ENCODE measurements at regions of chr7 and their contacts with region 1.

Region 1: GRCh38 chr7:98168181-98168905 is 42.9 kb upstream of the BHLHA15 start:
- DNase-seq: peak in 1 of 4 donors; percentile 76
- ATAC-seq: peak; percentile 83
- H3K4me3 ChIP-seq: no peak overlapping the region
- H3K27ac ChIP-seq: no peak overlapping the region
- H3K4me1 ChIP-seq: peaks cover 7 to 11% of the 10 kb centered on the region in 2 donors
- H3K27me3 ChIP-seq: no peaks in the 10 kb centered on the region
- CTCF ChIP-seq: peak; percentile 71 to 79

Region 2: GRCh38 chr7:98021588-98022351 is 146.6 kb before region 1 on chr7:
- intact Hi-C with region 1: loop called (anchors 5 to 10 kb)
- DNase-seq: peak; percentile 26 to 96 (median 67)
- ATAC-seq: peak; percentile 97
- H3K4me3 ChIP-seq: no peak overlapping the region
- H3K27ac ChIP-seq: no peak overlapping the region
- H3K4me1 ChIP-seq: no peaks in the 10 kb centered on the region
- H3K27me3 ChIP-seq: peaks cover 0 to 34% of the 10 kb centered on the region in 2 donors
- CTCF ChIP-seq: peak; percentile 95

Region 3: DNA sequence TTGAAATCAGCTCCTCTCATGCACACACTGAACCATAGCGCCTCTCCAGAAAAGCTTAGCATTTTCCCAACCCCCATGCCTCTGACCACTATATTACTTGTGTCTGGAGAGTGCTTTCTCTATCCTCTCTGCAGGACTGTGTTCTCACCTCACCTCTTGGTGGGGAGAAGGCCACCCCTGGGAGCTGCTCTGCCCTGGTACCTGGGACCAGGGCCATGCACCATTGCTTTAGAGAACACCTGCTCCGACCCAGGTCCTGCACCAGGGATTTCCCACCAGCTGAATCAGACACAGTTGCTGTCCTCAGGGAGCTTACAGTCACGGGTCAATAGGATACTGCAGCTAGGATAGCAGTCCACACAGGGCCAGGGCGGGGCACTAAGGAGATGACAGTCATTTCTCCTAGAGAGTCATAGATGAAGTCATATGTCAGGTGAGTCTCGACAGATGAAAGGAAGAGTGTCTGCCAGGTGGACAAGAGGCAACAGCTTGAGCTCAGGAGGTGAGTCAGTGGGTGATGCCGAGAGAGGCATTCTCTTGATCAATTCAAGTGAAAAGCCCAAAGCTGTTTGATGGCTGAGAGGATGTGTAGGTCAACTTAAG is 62.3 kb before region 1 on chr7:
- intact Hi-C with region 1: loop called in 1 of 2 experiments (anchors 2 kb)
- DNase-seq: no peak
- ATAC-seq: no peak
- H3K4me3 ChIP-seq: no peak overlapping the region
- H3K27ac ChIP-seq: no peak overlapping the region
- H3K4me1 ChIP-seq: peaks cover 13 to 34% of the 10 kb centered on the region in 2 donors
- H3K27me3 ChIP-seq: peaks cover 0 to 17% of the 10 kb centered on the region in 2 donors
- CTCF ChIP-seq: no peak

Measured in left lung (tissue), 14 donors.